A549 (cell line): ENCODE measurements at regions of chr15 and their contacts with region 1.

Region 1: GRCh38 chr15:64809649-64810496 is 15.6 kb downstream of the PIF1 start:
- DNase-seq: peak; percentile 78 to 98
- ATAC-seq: peak; percentile 85 to 95
- H3K4me3 ChIP-seq: no peak overlapping the region
- H3K27ac ChIP-seq: no peak overlapping the region
- H3K4me1 ChIP-seq: 0 out of 3 replicates have a peak, but pooled peaks cover 3% of the 10 kb centered on the region
- CTCF ChIP-seq: peak; percentile 99
- EP300 ChIP-seq: no peak
- POLR2A ChIP-seq: no peak
- RAD21 ChIP-seq: peak; percentile 95 to 98

Region 2: GRCh38 chr15:62940755-62941361 is 1869.0 kb before region 1 on chr15:
- CTCF ChIA-PET with region 1: no interaction called
- POLR2A ChIA-PET with region 1: no interaction called
- DNase-seq: peak; percentile 60 to 75
- ATAC-seq: peak; percentile 73 to 84
- H3K4me3 ChIP-seq: no peak overlapping the region
- H3K27ac ChIP-seq: peak overlapping the region; percentile 67 to 87
- H3K4me1 ChIP-seq: peaks cover 30% of the 10 kb centered on the region
- CTCF ChIP-seq: no peak
- EP300 ChIP-seq: no peak
- POLR2A ChIP-seq: no peak
- RAD21 ChIP-seq: no peak

Region 3: DNA sequence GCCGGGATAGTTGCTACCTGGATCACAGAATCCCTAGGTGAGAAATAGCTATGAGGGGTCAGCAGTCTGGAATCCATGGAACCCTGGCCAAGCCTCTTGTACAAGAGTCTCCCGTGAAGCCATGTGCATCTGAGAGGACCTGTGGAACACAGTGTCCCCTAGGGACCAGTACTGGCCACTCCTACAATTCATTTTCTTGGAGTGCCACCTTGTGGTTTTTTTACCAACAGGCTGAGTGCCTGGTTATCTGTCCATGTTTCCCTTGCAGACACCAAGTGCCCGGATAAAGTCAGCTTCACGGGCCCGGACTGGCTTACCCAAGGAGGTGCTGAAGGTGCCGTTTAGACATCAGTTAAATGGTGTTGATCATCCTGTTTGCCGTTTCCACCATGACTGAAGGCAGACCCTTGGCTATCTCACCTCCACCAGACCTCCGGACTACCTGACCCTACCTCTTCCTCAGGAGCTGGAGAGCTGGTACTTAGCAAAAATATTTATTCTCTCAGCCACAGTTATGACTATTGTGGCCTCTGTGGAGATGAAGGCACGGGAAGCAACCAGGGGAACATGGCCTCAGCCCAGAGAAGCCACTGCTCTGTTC is 128.3 kb before region 1 on chr15:
- CTCF ChIA-PET with region 1: interaction called, 99 read pairs
- POLR2A ChIA-PET with region 1: no interaction called
- DNase-seq: peak; percentile 86 to 98
- ATAC-seq: peak; percentile 95 to 97
- H3K4me3 ChIP-seq: no peak overlapping the region
- H3K27ac ChIP-seq: peak overlapping the region in 1 of 2 experiments; percentile 9; a peak in 1 of 6 replicates
- H3K4me1 ChIP-seq: peaks cover 4% of the 10 kb centered on the region; the same call in 1 of the 3 replicates
- CTCF ChIP-seq: peak; percentile 99
- EP300 ChIP-seq: no peak
- POLR2A ChIP-seq: no peak
- RAD21 ChIP-seq: peak; percentile 97 to 99

Region 4: DNA sequence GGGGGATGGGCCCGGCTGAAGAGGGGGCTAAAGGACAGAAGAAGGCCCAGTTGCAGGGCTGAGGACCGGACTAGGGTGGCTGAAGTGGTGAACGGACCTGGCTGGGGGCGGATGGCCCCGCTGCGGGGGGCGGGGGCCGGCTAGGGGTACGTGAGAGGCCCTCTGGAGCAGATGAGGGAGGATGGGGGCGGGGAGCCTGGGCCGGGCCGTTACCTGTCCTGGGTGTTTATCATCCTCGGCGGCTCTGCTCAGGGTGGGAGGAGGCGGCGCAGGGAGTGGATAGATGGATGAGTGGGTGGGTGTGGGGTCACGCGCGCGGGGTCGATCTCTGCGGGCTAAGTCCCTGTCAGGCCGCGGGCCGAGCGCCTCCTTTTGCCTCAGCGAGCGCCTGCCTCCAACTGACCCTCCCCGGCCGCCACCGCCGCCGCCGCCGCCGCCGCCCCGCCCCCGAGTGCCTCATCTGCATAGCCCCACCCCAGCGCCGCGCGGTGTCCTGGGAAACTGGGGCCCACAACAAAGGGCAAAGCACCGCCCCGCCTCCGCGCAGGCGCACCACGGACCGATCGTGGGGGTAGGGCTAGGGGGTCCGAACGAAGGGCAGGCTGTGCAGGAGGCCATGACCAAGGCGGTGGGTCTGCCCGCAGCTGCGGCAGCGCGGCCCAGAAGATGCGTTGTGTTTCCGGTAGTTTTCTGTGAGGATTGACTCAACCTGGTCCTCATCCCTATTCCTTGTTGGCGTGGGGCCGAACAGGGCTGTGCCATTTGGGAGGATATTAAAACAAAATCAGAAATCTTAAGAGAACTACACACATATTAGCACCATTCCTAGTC is 106.8 kb before region 1 on chr15:
- CTCF ChIA-PET with region 1: interaction called, 10 read pairs
- POLR2A ChIA-PET with region 1: no interaction called
- DNase-seq: peak; percentile 93 to 98
- ATAC-seq: peak; percentile 93 to 95
- H3K4me3 ChIP-seq: peak overlapping the region; percentile 75
- H3K27ac ChIP-seq: peak overlapping the region; percentile 88 to 94
- H3K4me1 ChIP-seq: peaks cover 46% of the 10 kb centered on the region
- CTCF ChIP-seq: peak; percentile 10; the same call in 1 of the 3 replicates
- EP300 ChIP-seq: no peak; a peak in 1 of 5 replicates
- POLR2A ChIP-seq: peak; percentile 98
- RAD21 ChIP-seq: no peak

Region 5: GRCh38 chr15:64731012-64731806 is 78.7 kb before region 1 on chr15:
- CTCF ChIA-PET with region 1: interaction called, 962 read pairs
- POLR2A ChIA-PET with region 1: no interaction called
- DNase-seq: peak; percentile 77 to 83
- ATAC-seq: peak; percentile 88 to 91
- H3K4me3 ChIP-seq: no peak overlapping the region
- H3K27ac ChIP-seq: no peak overlapping the region
- H3K4me1 ChIP-seq: peaks cover 9% of the 10 kb centered on the region
- CTCF ChIP-seq: peak; percentile 99
- EP300 ChIP-seq: no peak
- POLR2A ChIP-seq: no peak
- RAD21 ChIP-seq: peak; percentile 99 to 100

Region 6: DNA sequence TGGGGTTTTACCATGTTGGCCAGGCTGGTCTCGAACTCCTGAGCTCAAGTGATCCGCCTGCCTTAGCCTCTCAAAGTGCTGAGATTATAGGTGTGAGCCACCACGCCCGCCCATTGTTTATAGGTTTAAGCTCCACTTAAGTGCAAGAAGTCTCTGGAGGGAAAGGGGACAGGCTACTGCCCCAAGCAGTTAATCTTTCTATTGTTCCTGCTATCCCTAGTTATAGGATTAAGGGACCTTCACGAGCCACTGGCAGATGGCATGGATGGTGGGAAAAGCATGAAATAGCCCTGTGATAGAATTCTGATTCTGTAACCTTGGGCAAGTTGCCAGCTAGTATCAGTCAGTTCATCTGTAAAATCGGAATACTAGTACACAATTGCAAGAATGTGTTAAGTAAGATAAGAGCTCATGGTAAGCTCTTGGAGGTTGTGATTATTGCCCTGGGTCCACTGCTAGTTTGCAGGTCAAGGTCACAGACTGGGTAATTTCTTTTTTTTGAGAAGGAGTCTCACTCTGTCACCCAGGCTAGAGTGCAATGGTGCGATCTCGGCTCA is 29.2 kb before region 1 on chr15:
- CTCF ChIA-PET with region 1: interaction called, 44 read pairs
- POLR2A ChIA-PET with region 1: no interaction called
- DNase-seq: no peak
- ATAC-seq: no peak
- H3K4me3 ChIP-seq: no peak overlapping the region
- H3K27ac ChIP-seq: no peak overlapping the region
- H3K4me1 ChIP-seq: peaks cover 6% of the 10 kb centered on the region
- CTCF ChIP-seq: no peak
- EP300 ChIP-seq: no peak
- POLR2A ChIP-seq: no peak
- RAD21 ChIP-seq: no peak

Region 7: GRCh38 chr15:64825431-64826294 is 15.8 kb after region 1 on chr15 and contains the start of gene PIF1:
- CTCF ChIA-PET with region 1: interaction called, 110 read pairs
- POLR2A ChIA-PET with region 1: no interaction called
- DNase-seq: peak; percentile 98 to 99
- ATAC-seq: peak; percentile 99
- H3K4me3 ChIP-seq: peak within 1 kb of the TSS; percentile 61
- H3K27ac ChIP-seq: peak within 1 kb of the TSS; percentile 74 to 91
- H3K4me1 ChIP-seq: peaks cover 9% of the 10 kb centered on the region
- CTCF ChIP-seq: no peak
- EP300 ChIP-seq: no peak
- POLR2A ChIP-seq: peak; percentile 84
- RAD21 ChIP-seq: no peak
- polyA plus RNA-seq, gene PIF1: 8.5 and 11.1 TPM in 2 replicates

Region 8: DNA sequence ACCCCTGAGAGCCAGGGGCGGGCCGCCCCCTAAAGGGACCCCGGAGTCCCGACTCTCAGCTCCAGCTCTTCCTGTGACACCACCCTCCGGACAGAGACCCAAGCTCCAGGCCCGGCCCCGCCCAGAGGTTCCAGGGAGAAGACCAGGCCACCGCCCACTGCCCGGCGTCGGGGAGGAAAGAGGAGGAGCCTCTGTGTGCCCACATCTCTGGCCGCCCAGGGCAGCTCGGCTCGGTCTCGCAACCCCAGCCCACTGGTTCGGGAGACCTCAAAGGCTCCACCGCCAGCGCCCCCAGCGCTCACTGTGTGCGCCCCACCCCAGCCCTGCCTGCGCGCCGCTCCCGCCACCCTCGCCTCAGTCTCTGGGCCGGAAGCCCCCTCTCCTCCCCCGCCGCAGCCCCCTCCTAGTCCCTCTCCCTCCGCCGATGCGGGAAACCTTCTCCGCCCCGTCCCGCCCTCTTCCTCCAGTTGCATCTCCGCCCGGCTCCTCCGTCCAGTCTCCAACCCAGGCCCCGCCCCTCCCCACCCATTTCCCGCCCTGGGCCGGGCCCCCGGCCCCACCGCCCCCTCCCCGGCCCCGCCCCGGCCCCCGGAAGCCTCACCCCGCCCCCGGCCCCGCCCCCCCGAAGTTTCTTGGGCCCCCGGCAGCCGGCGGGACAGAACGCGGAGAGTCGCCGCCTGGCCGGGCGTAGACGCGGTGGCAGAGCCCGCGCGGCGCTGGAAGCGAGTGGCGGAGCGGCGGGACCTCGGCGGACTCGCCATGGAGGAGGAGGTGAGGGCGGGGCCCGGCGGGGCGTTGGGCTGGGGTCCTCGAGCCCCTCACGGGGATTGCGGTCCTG is 31.6 kb after region 1 on chr15 and contains the start of gene PLEKHO2:
- CTCF ChIA-PET with region 1: interaction called, 27 read pairs
- POLR2A ChIA-PET with region 1: no interaction called
- DNase-seq: peak; percentile 93 to 99
- ATAC-seq: peak; percentile 87 to 97
- H3K4me3 ChIP-seq: peak within 1 kb of the TSS; percentile 70
- H3K27ac ChIP-seq: peak within 1 kb of the TSS; percentile 82 to 95
- H3K4me1 ChIP-seq: peaks cover 13% of the 10 kb centered on the region; the same call in 2 of the 3 replicates
- CTCF ChIP-seq: no peak
- EP300 ChIP-seq: no peak
- POLR2A ChIP-seq: peak; percentile 76
- RAD21 ChIP-seq: no peak; a peak in 1 of 5 replicates
- polyA plus RNA-seq, gene PLEKHO2: 2.8 and 2.9 TPM in 2 replicates